Activated B cell treated with CpG ODN at 0.5 μM for 24 hours (primary cell): ENCODE measurements at regions of chr3 and their contacts with region 1.

Region 1: GRCh38 chr3:105397974-105398373 is 31.3 kb downstream of the ALCAM start:
- DNase-seq: no peak
- ATAC-seq: no peak
- H3K4me3 Mint-ChIP-seq: no peak overlapping the region
- H3K27ac Mint-ChIP-seq: no peak overlapping the region
- H3K4me1 Mint-ChIP-seq: peaks cover 5% of the 10 kb centered on the region
- H3K27me3 Mint-ChIP-seq: no peaks in the 10 kb centered on the region
- CTCF ChIP-seq: no peak

Region 2: DNA sequence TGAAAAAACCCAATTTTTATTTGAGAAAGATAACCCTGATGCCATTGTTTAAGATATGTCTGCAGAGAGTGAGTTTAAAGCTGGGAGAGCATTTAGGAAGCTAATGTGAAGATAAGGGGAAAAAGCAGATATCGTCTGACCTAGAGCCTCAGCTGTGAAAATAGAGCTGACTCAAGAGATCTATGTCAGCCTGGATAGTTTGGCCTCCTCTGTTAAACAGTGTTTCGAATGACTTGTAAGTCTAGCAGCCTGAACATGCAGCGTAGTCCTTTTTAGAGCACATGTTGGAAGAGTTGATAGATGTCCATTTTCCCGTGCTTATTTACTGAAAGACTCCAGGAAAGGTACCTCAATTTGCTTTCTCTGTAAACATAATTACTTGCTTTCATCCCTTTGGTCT is 16.9 kb after region 1 on chr3:
- CTCF ChIA-PET with region 1: no interaction called
- POLR2A ChIA-PET with region 1: no interaction called
- intact Hi-C with region 1: loop called (anchors 2 kb)
- DNase-seq: no peak
- ATAC-seq: no peak
- H3K4me3 Mint-ChIP-seq: no peak overlapping the region
- H3K27ac Mint-ChIP-seq: no peak overlapping the region
- H3K4me1 Mint-ChIP-seq: peaks cover 46% of the 10 kb centered on the region
- H3K27me3 Mint-ChIP-seq: no peaks in the 10 kb centered on the region
- CTCF ChIP-seq: no peak